ENCODE measurements at regions of chr17 and their contacts with region 1.

Region 1: GRCh38 chr17:80195731-80196529 is 24.2 kb downstream of the SGSH start:
- DNase-seq: peak; percentile 50
- ATAC-seq: no peak
- H3K4me3 Mint-ChIP-seq: no peak overlapping the region
- H3K27ac Mint-ChIP-seq: no peak overlapping the region
- H3K4me1 Mint-ChIP-seq: no peaks in the 10 kb centered on the region
- H3K27me3 Mint-ChIP-seq: peaks cover 5% of the 10 kb centered on the region
- CTCF ChIP-seq: peak; percentile 93

Region 2: GRCh38 chr17:80219013-80219762 is 23.3 kb after region 1 on chr17:
- CTCF ChIA-PET with region 1: interaction called, 10 read pairs
- POLR2A ChIA-PET with region 1: interaction called, 6 read pairs
- intact Hi-C with region 1: no loop called
- DNase-seq: peak; percentile 75
- ATAC-seq: peak; percentile 89
- H3K4me3 Mint-ChIP-seq: peak overlapping the region; percentile 90
- H3K27ac Mint-ChIP-seq: peak overlapping the region; percentile 92
- H3K4me1 Mint-ChIP-seq: peaks cover 20% of the 10 kb centered on the region
- H3K27me3 Mint-ChIP-seq: no peaks in the 10 kb centered on the region
- CTCF ChIP-seq: no peak

Region 3: GRCh38 chr17:80254396-80255251 is 58.7 kb after region 1 on chr17:
- CTCF ChIA-PET with region 1: interaction called, 37 read pairs
- POLR2A ChIA-PET with region 1: interaction called, 3 read pairs
- intact Hi-C with region 1: loop called (anchors 1 kb)
- DNase-seq: no peak
- ATAC-seq: peak; percentile 74
- H3K4me3 Mint-ChIP-seq: peak overlapping the region; percentile 50
- H3K27ac Mint-ChIP-seq: peak overlapping the region; percentile 67
- H3K4me1 Mint-ChIP-seq: peaks cover 40% of the 10 kb centered on the region
- H3K27me3 Mint-ChIP-seq: no peaks in the 10 kb centered on the region
- CTCF ChIP-seq: no peak

Region 4: GRCh38 chr17:80292521-80292971 is 96.6 kb after region 1 on chr17:
- CTCF ChIA-PET with region 1: no interaction called
- POLR2A ChIA-PET with region 1: no interaction called
- intact Hi-C with region 1: loop called (anchors 10 kb)
- DNase-seq: no peak
- ATAC-seq: no peak
- H3K4me3 Mint-ChIP-seq: no peak overlapping the region
- H3K27ac Mint-ChIP-seq: no peak overlapping the region
- H3K4me1 Mint-ChIP-seq: no peaks in the 10 kb centered on the region
- H3K27me3 Mint-ChIP-seq: no peaks in the 10 kb centered on the region
- CTCF ChIP-seq: no peak

Region 5: GRCh38 chr17:80364216-80364618 is 168.3 kb after region 1 on chr17:
- CTCF ChIA-PET with region 1: interaction called, 10 read pairs
- POLR2A ChIA-PET with region 1: no interaction called
- intact Hi-C with region 1: loop called (anchors 5 kb)
- DNase-seq: no peak
- ATAC-seq: no peak
- H3K4me3 Mint-ChIP-seq: no peak overlapping the region
- H3K27ac Mint-ChIP-seq: no peak overlapping the region
- H3K4me1 Mint-ChIP-seq: no peaks in the 10 kb centered on the region
- H3K27me3 Mint-ChIP-seq: no peaks in the 10 kb centered on the region
- CTCF ChIP-seq: no peak

Region 6: GRCh38 chr17:80575057-80575875 is 379.3 kb after region 1 on chr17:
- CTCF ChIA-PET with region 1: no interaction called
- POLR2A ChIA-PET with region 1: no interaction called
- intact Hi-C with region 1: loop called (anchors 2 kb)
- DNase-seq: peak; percentile 81
- ATAC-seq: peak; percentile 100
- H3K4me3 Mint-ChIP-seq: no peak overlapping the region
- H3K27ac Mint-ChIP-seq: no peak overlapping the region
- H3K4me1 Mint-ChIP-seq: peaks cover 7% of the 10 kb centered on the region
- H3K27me3 Mint-ChIP-seq: no peaks in the 10 kb centered on the region
- CTCF ChIP-seq: peak; percentile 100

Region 7: DNA sequence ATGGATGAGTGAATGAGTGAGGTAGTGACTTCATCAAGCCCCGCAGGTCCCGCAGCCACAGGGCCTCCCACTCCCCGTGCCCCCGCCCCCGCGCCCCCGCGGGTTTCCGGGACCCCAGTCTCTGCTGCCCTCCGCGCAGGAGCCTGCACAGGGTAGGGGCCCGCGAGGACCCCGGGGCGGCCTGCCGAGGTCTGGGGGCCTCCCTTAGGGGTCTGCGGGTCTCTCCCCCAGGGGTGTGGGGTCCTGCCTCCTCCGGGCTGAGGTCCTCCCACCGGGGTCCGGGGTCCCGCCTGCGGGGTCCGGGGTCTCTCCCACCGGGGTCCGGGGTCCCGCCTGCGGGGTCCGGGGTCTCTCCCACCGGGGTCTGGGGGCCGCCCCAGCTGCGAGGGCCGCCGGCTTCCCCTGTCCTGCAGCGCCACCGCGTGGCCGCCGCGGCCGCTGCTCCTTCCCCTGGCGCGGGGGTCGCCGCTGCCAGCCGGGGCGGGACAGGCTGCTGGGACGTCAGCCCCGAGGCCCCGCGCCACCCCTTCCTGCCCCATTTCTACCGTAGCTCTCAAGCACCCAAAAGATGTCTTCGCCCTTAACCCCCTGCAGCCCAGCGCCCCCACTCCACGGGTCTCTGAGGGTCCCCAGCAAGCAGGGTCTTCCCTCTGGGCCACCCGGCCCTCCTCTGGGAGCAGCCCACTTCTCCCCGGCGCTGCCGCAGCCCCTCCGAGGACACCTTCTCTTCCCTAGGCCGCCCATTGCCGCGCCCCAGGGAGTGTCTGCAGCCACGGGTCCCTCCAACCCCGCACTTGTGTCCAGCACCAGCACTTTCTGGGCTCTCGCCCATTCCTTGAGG is 785.4 kb after region 1 on chr17:
- CTCF ChIA-PET with region 1: no interaction called
- POLR2A ChIA-PET with region 1: no interaction called
- intact Hi-C with region 1: loop called (anchors 5 kb)
- DNase-seq: peak; percentile 61
- ATAC-seq: peak; percentile 74
- H3K4me3 Mint-ChIP-seq: peak overlapping the region; percentile 2
- H3K27ac Mint-ChIP-seq: no peak overlapping the region
- H3K4me1 Mint-ChIP-seq: peaks cover 7% of the 10 kb centered on the region
- H3K27me3 Mint-ChIP-seq: peaks cover 15% of the 10 kb centered on the region
- CTCF ChIP-seq: peak; percentile 19

Measured in activated B cell treated with CpG ODN at 0.5 μM for 24 hours (primary cell).